HepG2 (cell line): ENCODE measurements at regions of chr9 and their contacts with region 1.

Region 1: DNA sequence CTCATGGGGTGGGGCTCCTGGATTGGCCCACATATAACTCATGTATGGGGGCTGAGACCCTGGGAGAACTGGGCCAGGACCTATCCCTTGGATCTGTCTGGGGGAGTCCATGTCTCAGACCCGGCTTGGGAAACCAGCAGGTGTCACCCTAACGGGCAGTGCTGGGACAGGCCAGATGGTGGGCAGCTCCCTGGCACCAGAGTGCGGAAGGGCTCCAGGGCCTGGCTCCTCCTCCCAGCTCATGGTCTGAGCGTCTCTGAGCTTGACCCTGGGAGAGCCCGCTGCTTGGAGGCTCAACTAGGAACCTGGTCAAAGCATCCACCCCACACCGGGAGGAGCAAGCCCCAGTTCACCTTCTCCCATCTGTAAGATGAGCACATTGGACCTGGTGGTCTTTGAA is 15.5 kb upstream of the NCS1 start:
- DNase-seq: peak; percentile 35
- ATAC-seq: peak; percentile 80
- H3K4me3 ChIP-seq: no peak overlapping the region
- H3K27ac ChIP-seq: no peak overlapping the region
- H3K4me1 ChIP-seq: peaks cover 38% of the 10 kb centered on the region
- H3K27me3 ChIP-seq: peaks cover 0 to 2% of the 10 kb centered on the region in 2 experiments; a peak in 2 of 5 replicates
- CTCF ChIP-seq: peak; percentile 67
- EP300 ChIP-seq: no peak
- POLR2A ChIP-seq: no peak
- RAD21 ChIP-seq: peak; percentile 57

Region 2: GRCh38 chr9:130176760-130177159 is 20.1 kb after region 1 on chr9:
- CTCF ChIA-PET with region 1: no interaction called
- POLR2A ChIA-PET with region 1: no interaction called
- in situ Hi-C with region 1: no loop called
- intact Hi-C with region 1: loop called (anchors 1 kb)
- DNase-seq: no peak
- ATAC-seq: no peak
- H3K4me3 ChIP-seq: no peak overlapping the region
- H3K27ac ChIP-seq: no peak overlapping the region
- H3K4me1 ChIP-seq: peaks cover 9% of the 10 kb centered on the region; the same call in 1 of the 2 replicates
- H3K27me3 ChIP-seq: peaks cover under 1% of the 10 kb centered on the region in 2 experiments; a peak in 2 of 5 replicates
- CTCF ChIP-seq: no peak
- EP300 ChIP-seq: no peak
- POLR2A ChIP-seq: no peak
- RAD21 ChIP-seq: no peak

Region 3: DNA sequence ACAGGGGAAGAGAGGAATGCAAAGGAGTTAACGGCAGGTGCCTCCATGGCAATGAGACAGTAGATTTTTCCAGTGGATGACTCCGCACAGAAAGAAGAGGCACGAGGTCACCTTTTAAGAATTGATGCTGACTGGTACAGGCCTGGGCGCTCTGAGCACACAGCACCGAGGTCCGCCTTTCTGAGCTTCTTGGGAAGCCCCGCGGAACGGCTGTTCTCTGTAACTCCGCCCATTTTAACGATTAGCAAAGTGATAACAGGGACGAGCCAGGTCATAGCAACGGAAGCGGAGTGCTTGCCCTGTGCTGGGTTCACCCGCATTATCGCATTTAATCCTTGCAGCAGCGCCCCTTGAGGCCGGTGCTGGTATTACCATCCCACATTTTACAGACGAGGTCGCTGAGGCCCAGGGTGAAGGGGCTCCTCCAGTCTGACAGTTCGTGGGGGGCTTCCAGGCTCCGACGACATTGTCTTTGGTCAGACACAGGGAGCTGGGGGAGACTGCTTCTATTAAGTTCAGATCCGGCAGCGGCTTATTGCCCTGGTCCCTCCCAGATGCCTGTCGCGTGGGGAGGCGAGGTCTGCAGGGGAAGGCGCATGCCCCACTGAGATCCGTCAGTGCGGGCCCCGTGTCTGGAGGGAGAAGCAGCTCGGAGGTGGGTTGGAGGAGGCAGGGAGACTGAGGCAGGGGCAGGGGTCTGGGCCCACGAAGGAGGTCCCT is 86.5 kb after region 1 on chr9:
- CTCF ChIA-PET with region 1: no interaction called
- POLR2A ChIA-PET with region 1: no interaction called
- in situ Hi-C with region 1: no loop called
- intact Hi-C with region 1: loop called (anchors 2 kb)
- DNase-seq: peak; percentile 65
- ATAC-seq: peak; percentile 71
- H3K4me3 ChIP-seq: peak overlapping the region in 1 of 3 experiments; percentile 39; a peak in 1 of 6 replicates
- H3K27ac ChIP-seq: no peak overlapping the region
- H3K4me1 ChIP-seq: peaks cover 44% of the 10 kb centered on the region
- H3K27me3 ChIP-seq: peaks cover 0 to 6% of the 10 kb centered on the region in 2 experiments; a peak in 2 of 5 replicates
- CTCF ChIP-seq: peak; percentile 84
- EP300 ChIP-seq: no peak
- POLR2A ChIP-seq: no peak
- RAD21 ChIP-seq: no peak